ENCODE measurements at regions of chr10 and their contacts with region 1.

Region 1: GRCh38 chr10:93352638-93353383 is 129.3 kb downstream of the MYOF start:
- DNase-seq: peak; percentile 64
- H3K4me3 ChIP-seq: no peak overlapping the region
- H3K27ac ChIP-seq: no peak overlapping the region
- H3K4me1 ChIP-seq: no peaks in the 10 kb centered on the region
- H3K27me3 ChIP-seq: no peaks in the 10 kb centered on the region
- CTCF ChIP-seq: peak; percentile 74

Region 2: GRCh38 chr10:92886334-92886961 is 466.4 kb before region 1 on chr10:
- CTCF ChIA-PET with region 1: no interaction called
- POLR2A ChIA-PET with region 1: no interaction called
- intact Hi-C with region 1: loop called (anchors 5 kb)
- DNase-seq: no peak
- H3K4me3 ChIP-seq: no peak overlapping the region
- H3K27ac ChIP-seq: no peak overlapping the region
- H3K4me1 ChIP-seq: no peaks in the 10 kb centered on the region
- H3K27me3 ChIP-seq: no peaks in the 10 kb centered on the region
- CTCF ChIP-seq: no peak

Region 3: DNA sequence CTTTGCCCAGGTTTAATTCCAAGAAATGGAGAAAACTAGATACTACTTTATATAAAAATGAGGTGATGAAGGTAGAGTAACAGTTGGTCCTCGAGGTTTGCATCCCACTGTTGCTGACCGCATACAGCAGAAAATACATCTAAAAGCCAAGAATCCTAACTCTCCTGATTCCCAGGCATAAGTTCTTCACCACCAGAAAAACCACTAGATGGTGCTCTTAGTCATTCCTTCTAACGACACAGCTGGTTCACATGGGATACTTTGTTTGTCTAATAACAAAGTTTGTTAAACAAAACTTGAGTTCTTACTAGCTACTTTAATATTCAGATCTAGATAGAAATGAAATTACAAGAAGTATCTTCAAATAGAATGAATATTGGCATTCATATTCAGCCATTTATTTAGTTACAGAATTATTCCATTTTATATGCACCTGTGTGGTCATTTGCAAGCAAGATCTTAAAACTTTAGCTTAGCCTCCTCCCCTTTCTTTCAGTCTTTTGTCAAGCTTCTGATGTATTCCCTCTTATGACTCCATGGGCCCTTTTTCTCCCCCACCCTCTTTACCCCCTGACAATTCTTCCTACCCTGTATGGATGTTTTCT is 346.3 kb before region 1 on chr10:
- CTCF ChIA-PET with region 1: no interaction called
- POLR2A ChIA-PET with region 1: no interaction called
- intact Hi-C with region 1: loop called (anchors 5 kb)
- DNase-seq: peak; percentile 62
- H3K4me3 ChIP-seq: no peak overlapping the region
- H3K27ac ChIP-seq: no peak overlapping the region
- H3K4me1 ChIP-seq: no peaks in the 10 kb centered on the region
- H3K27me3 ChIP-seq: no peaks in the 10 kb centered on the region
- CTCF ChIP-seq: peak; percentile 72

Region 4: GRCh38 chr10:93080350-93081046 is 272.3 kb before region 1 on chr10:
- CTCF ChIA-PET with region 1: interaction called, 6 read pairs
- POLR2A ChIA-PET with region 1: no interaction called
- intact Hi-C with region 1: loop called (anchors 1 kb)
- DNase-seq: peak; percentile 61
- H3K4me3 ChIP-seq: peak overlapping the region; percentile 24
- H3K27ac ChIP-seq: no peak overlapping the region
- H3K4me1 ChIP-seq: no peaks in the 10 kb centered on the region
- H3K27me3 ChIP-seq: peaks cover 30% of the 10 kb centered on the region
- CTCF ChIP-seq: peak; percentile 91

Region 5: GRCh38 chr10:93115661-93116383 is 237.0 kb before region 1 on chr10:
- CTCF ChIA-PET with region 1: no interaction called
- POLR2A ChIA-PET with region 1: no interaction called
- intact Hi-C with region 1: loop called (anchors 10 kb)
- DNase-seq: peak; percentile 76
- H3K4me3 ChIP-seq: no peak overlapping the region
- H3K27ac ChIP-seq: no peak overlapping the region
- H3K4me1 ChIP-seq: no peaks in the 10 kb centered on the region
- H3K27me3 ChIP-seq: peaks cover 7% of the 10 kb centered on the region
- CTCF ChIP-seq: peak; percentile 60

Region 6: DNA sequence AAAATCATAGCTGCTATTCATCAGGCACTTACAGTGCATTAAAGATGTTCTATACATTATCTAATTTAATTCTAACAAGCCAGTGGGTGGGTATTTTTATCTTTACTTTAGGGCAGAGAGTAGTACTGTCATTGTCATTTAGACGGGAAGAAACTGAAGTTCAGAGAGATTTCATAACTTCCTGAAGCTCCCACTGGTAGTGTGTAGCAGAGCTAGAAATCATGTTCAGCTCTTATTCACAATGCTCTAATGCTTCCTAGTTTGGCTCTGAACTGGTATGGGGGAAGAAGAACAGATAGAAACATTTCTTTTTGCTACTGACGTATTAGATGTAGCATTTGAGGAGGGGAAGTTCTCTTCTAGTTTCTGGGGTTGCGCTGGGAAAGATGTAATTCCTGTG is 162.4 kb before region 1 on chr10:
- CTCF ChIA-PET with region 1: no interaction called
- POLR2A ChIA-PET with region 1: no interaction called
- intact Hi-C with region 1: no loop called
- DNase-seq: no peak
- H3K4me3 ChIP-seq: no peak overlapping the region
- H3K27ac ChIP-seq: no peak overlapping the region
- H3K4me1 ChIP-seq: no peaks in the 10 kb centered on the region
- H3K27me3 ChIP-seq: peaks cover 37% of the 10 kb centered on the region
- CTCF ChIP-seq: no peak

Region 7: GRCh38 chr10:93224005-93224779 is 128.6 kb before region 1 on chr10:
- CTCF ChIA-PET with region 1: no interaction called
- POLR2A ChIA-PET with region 1: no interaction called
- intact Hi-C with region 1: loop called (anchors 5 kb)
- DNase-seq: no peak
- H3K4me3 ChIP-seq: no peak overlapping the region
- H3K27ac ChIP-seq: no peak overlapping the region
- H3K4me1 ChIP-seq: no peaks in the 10 kb centered on the region
- H3K27me3 ChIP-seq: no peaks in the 10 kb centered on the region
- CTCF ChIP-seq: peak; percentile 41

Region 8: GRCh38 chr10:93482145-93482834 is 129.5 kb after region 1 on chr10 and contains the start of gene MYOF:
- CTCF ChIA-PET with region 1: interaction called, 13 read pairs
- POLR2A ChIA-PET with region 1: no interaction called
- intact Hi-C with region 1: no loop called
- DNase-seq: peak; percentile 85
- H3K4me3 ChIP-seq: peak within 1 kb of the TSS; percentile 65
- H3K27ac ChIP-seq: peak within 1 kb of the TSS; percentile 58
- H3K4me1 ChIP-seq: no peaks in the 10 kb centered on the region
- H3K27me3 ChIP-seq: no peaks in the 10 kb centered on the region
- CTCF ChIP-seq: peak; percentile 65
- total RNA-seq, gene MYOF: 15.9 and 24.2 TPM in 2 replicates

Region 9: GRCh38 chr10:93600446-93601145 is 247.8 kb after region 1 on chr10:
- CTCF ChIA-PET with region 1: no interaction called
- POLR2A ChIA-PET with region 1: no interaction called
- intact Hi-C with region 1: no loop called
- DNase-seq: no peak
- H3K4me3 ChIP-seq: peak overlapping the region; percentile 26
- H3K27ac ChIP-seq: no peak overlapping the region
- H3K4me1 ChIP-seq: no peaks in the 10 kb centered on the region
- H3K27me3 ChIP-seq: peaks cover 55% of the 10 kb centered on the region
- CTCF ChIP-seq: no peak